ENCODE measurements at regions of chr10 and their contacts with region 1.

Region 1: DNA sequence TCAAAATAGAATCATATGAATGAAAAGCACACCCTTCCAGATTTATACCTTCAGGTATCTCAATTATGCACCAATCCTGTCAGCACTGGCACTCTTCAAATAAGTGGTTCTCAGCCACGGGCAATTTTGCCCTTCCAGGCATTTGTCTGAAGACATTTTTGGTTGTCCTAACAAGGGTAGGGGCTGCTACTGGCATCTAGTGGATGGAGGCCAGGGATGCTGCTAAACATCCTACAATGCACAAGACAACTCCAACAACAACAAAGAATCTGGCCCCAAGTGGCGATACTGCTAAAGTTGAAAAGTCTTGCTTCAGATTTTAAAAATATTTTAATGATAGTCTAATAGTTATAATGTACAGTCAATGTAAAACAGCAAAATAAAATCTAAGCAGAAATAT is 16.1 kb downstream of the CCDC186 start:
- DNase-seq: no peak
- H3K4me3 Mint-ChIP-seq: no peak overlapping the region
- H3K27ac Mint-ChIP-seq: no peak overlapping the region
- H3K4me1 Mint-ChIP-seq: no peaks in the 10 kb centered on the region
- H3K27me3 Mint-ChIP-seq: no peaks in the 10 kb centered on the region
- CTCF ChIP-seq: no peak

Region 2: GRCh38 chr10:113907166-113907565 is 250.7 kb before region 1 on chr10:
- CTCF ChIA-PET with region 1: no interaction called
- POLR2A ChIA-PET with region 1: no interaction called
- intact Hi-C with region 1: no loop called
- DNase-seq: peak; percentile 49
- H3K4me3 Mint-ChIP-seq: no peak overlapping the region
- H3K27ac Mint-ChIP-seq: no peak overlapping the region
- H3K4me1 Mint-ChIP-seq: no peaks in the 10 kb centered on the region
- H3K27me3 Mint-ChIP-seq: no peaks in the 10 kb centered on the region
- CTCF ChIP-seq: no peak

Region 3: GRCh38 chr10:113982769-113983168 is 175.1 kb before region 1 on chr10:
- CTCF ChIA-PET with region 1: no interaction called
- POLR2A ChIA-PET with region 1: no interaction called
- intact Hi-C with region 1: no loop called
- DNase-seq: no peak
- H3K4me3 Mint-ChIP-seq: no peak overlapping the region
- H3K27ac Mint-ChIP-seq: no peak overlapping the region
- H3K4me1 Mint-ChIP-seq: peaks cover 4% of the 10 kb centered on the region
- H3K27me3 Mint-ChIP-seq: no peaks in the 10 kb centered on the region
- CTCF ChIP-seq: no peak

Region 4: DNA sequence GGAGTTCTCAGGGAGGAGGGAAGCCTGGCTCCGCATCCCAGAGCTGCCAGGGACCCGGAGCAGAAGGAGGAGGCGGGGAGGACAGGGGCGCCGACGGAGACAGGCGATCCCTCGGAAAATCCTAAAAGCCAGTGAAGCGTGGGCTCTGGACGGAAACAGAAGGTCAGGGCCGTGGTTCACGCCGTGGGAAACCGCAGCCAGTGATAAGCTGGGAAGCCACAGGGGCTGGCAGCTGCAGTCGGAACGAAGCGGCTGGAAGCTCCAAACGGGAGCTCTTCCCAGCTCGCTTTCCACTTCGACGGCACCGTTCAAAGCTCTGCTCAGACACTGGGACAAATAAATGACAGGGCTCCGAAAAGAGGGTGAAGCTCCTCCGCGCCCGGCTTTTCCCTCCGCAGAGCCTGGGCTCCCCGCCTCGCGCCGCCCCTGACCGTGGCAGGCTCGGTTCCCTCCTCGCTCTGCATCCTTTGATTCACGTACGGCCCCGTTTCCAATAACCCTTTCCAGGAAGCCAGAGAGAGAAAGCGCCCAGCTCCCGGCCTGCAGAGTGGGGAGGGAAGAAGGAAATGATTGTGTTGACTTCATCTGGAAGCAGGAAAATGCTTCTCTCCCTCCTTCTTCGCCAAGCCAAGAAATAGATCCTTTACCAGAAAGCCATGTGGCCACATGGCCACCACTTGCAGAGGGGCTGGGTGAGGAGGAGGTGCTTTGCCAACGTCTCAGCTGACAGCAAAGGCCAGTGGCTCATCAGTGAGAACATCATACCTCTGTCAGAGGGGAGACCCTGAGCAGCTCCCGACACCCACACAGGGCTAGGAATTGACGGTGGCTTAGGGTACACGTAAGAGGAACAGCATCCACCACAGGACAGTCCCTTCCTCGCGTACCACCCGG is 56.8 kb before region 1 on chr10:
- CTCF ChIA-PET with region 1: no interaction called
- POLR2A ChIA-PET with region 1: no interaction called
- intact Hi-C with region 1: no loop called
- DNase-seq: no peak
- H3K4me3 Mint-ChIP-seq: no peak overlapping the region
- H3K27ac Mint-ChIP-seq: no peak overlapping the region
- H3K4me1 Mint-ChIP-seq: no peaks in the 10 kb centered on the region
- H3K27me3 Mint-ChIP-seq: no peaks in the 10 kb centered on the region
- CTCF ChIP-seq: no peak

Region 5: GRCh38 chr10:114168426-114169009 is 10.6 kb after region 1 on chr10:
- CTCF ChIA-PET with region 1: interaction called, 10 read pairs
- POLR2A ChIA-PET with region 1: interaction called, 31 read pairs
- intact Hi-C with region 1: no loop called
- DNase-seq: no peak
- H3K4me3 Mint-ChIP-seq: no peak overlapping the region
- H3K27ac Mint-ChIP-seq: no peak overlapping the region
- H3K4me1 Mint-ChIP-seq: peaks cover 10% of the 10 kb centered on the region
- H3K27me3 Mint-ChIP-seq: no peaks in the 10 kb centered on the region
- CTCF ChIP-seq: no peak

Region 6: GRCh38 chr10:114593240-114593784 is 435.4 kb after region 1 on chr10:
- CTCF ChIA-PET with region 1: no interaction called
- POLR2A ChIA-PET with region 1: no interaction called
- intact Hi-C with region 1: no loop called
- DNase-seq: no peak
- H3K4me3 Mint-ChIP-seq: no peak overlapping the region
- H3K27ac Mint-ChIP-seq: no peak overlapping the region
- H3K4me1 Mint-ChIP-seq: no peaks in the 10 kb centered on the region
- H3K27me3 Mint-ChIP-seq: no peaks in the 10 kb centered on the region
- CTCF ChIP-seq: no peak

Measured in MCF 10A (cell line).